ENCODE measurements at regions of chr14 and their contacts with region 1.

Region 1: GRCh38 chr14:76827696-76828296 is 1.6 kb downstream of the LRRC74A start:
- DNase-seq: peak; percentile 51 to 61
- ATAC-seq: peak in 7 of 8 donors; percentile 36 to 61 (median 47)
- H3K4me3 ChIP-seq: peak overlapping the region in 9 of 10 donors; percentile 7 to 50 (median 34)
- H3K27ac ChIP-seq: peak overlapping the region; percentile 2 to 85 (median 80)
- H3K4me1 ChIP-seq: peaks cover 0 to 48% (median 22%) of the 10 kb centered on the region in 9 donors
- H3K27me3 ChIP-seq: no peaks in the 10 kb centered on the region
- CTCF ChIP-seq: no peak

Region 2: GRCh38 chr14:76752744-76753143 is 75.1 kb before region 1 on chr14:
- intact Hi-C with region 1: no loop called
- DNase-seq: no peak
- ATAC-seq: no peak
- H3K4me3 ChIP-seq: no peak overlapping the region
- H3K27ac ChIP-seq: no peak overlapping the region
- H3K4me1 ChIP-seq: no peaks in the 10 kb centered on the region
- H3K27me3 ChIP-seq: no peaks in the 10 kb centered on the region
- CTCF ChIP-seq: no peak

Region 3: DNA sequence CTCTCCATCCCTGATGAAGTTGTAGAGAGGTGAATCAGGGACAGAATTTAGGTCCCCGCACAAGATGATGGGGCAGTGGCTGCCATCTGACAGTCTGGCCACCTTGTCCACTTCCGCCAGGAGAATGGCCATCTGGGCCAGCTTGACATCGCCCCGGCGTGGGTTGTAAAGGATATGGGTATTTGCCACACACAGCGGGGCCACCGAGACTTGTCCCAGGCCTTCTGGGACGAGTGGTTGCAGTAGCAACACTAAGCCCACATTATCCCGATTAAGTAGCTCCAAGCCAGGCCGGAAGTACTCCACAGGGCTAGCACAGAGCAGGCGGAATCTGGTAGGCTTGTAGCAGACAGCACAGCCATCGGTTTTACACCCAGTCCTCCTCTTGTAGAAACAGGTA is 21.4 kb before region 1 on chr14:
- intact Hi-C with region 1: loop called in 1 of 10 experiments (anchors 1 kb)
- DNase-seq: no peak
- ATAC-seq: no peak
- H3K4me3 ChIP-seq: no peak overlapping the region
- H3K27ac ChIP-seq: no peak overlapping the region
- H3K4me1 ChIP-seq: peaks cover 0 to 24% (median 15%) of the 10 kb centered on the region in 9 donors
- H3K27me3 ChIP-seq: no peaks in the 10 kb centered on the region
- CTCF ChIP-seq: no peak

Region 4: GRCh38 chr14:76918751-76919543 is 91.2 kb after region 1 on chr14:
- intact Hi-C with region 1: no loop called
- DNase-seq: peak; percentile 93 to 94
- ATAC-seq: peak; percentile 86 to 93 (median 91)
- H3K4me3 ChIP-seq: peak overlapping the region in 4 of 10 donors; percentile 1 to 16 (median 6)
- H3K27ac ChIP-seq: peak overlapping the region; percentile 83 to 98 (median 92)
- H3K4me1 ChIP-seq: peaks cover 35 to 75% (median 56%) of the 10 kb centered on the region in 9 donors
- H3K27me3 ChIP-seq: no peaks in the 10 kb centered on the region
- CTCF ChIP-seq: no peak

Measured in heart right ventricle (tissue), 16 donors.